Adrenal gland (tissue), 19 donors: ENCODE measurements at regions of chr6 and their contacts with region 1.

Region 1: GRCh38 chr6:88982720-88983119 is 19.3 kb upstream of the RNGTT start:
- DNase-seq: peak; percentile 51 to 78 (median 70)
- H3K4me3 ChIP-seq: peak overlapping the region in 1 of 4 donors; percentile 26
- H3K27ac ChIP-seq: no peak overlapping the region
- H3K4me1 ChIP-seq: peaks cover 4 to 5% of the 10 kb centered on the region in 2 donors
- H3K27me3 ChIP-seq: no peaks in the 10 kb centered on the region
- CTCF ChIP-seq: peak; percentile 44 to 88 (median 82)
- POLR2A ChIP-seq: peak in 1 of 2 donors; percentile 18

Region 2: DNA sequence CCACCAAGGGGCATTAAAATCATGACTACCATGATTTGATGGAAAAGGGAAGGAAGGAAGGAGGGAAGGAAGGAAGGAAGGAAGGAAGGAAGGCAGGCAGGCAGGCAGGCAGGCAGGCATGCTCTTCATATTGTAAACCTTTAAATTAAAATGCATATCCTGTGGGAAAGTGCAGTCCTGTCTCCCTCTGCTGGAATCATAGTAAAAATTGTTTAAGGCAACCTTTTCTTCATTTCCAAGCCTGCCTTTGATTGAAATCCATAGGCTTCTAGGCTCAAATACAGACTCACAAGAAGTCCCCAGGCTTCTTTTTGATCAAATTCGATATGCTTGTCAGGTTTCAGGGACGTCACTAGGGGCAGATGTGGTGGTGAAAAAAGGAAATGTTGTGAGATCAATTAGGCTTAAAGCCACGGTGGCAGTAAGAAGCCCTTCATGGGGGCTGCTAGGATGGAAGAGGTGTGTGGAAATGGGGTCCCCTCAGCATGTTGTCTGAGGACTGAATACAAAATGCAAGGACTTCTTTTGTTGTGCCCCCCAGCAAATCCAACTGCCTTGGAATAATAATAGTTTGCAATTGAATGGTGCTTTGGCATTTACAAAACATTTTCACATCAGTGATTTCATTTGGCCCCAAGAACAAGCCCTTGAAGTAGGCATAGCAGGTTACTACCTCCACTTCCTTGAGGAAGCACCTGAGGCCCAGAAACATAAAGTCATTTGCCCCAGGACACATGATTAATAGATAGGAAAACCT is 260.0 kb after region 1 on chr6:
- intact Hi-C with region 1: loop called (anchors 5 kb)
- DNase-seq: no peak
- H3K4me3 ChIP-seq: no peak overlapping the region
- H3K27ac ChIP-seq: no peak overlapping the region
- H3K4me1 ChIP-seq: no peaks in the 10 kb centered on the region
- H3K27me3 ChIP-seq: peaks cover 4% of the 10 kb centered on the region
- CTCF ChIP-seq: peak; percentile 38 to 79 (median 56)
- POLR2A ChIP-seq: no peak